Ovary (tissue), 10 donors: ENCODE measurements at regions of chr1 and their contacts with region 1.

Region 1: GRCh38 chr1:173570370-173571007 is 32.4 kb downstream of the SLC9C2 start:
- DNase-seq: no peak
- H3K4me3 ChIP-seq: no peak overlapping the region
- H3K27ac ChIP-seq: no peak overlapping the region
- H3K4me1 ChIP-seq: no peaks in the 10 kb centered on the region
- H3K27me3 ChIP-seq: no peaks in the 10 kb centered on the region
- CTCF ChIP-seq: no peak
- EP300 ChIP-seq: no peak
- POLR2A ChIP-seq: no peak

Region 2: DNA sequence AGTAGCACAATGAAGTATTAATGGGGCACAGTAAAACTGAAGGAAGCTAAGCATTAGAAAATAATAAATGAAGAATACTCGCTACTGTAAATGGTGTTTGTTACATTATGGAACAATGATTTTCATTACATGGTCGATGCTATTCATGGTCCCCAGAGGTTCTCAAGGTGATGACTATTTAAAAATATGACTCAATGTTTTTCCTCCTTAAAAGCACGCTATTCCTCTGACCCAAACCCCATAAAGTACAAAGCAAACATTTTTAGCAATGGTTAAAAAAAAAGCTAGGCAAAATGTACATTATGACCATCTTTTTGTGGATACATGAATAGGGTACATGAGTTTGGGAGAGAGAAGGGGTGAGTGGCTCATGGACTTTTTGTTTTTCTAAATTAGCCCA is 1862.9 kb before region 1 on chr1:
- intact Hi-C with region 1: loop called in 1 of 4 experiments (anchors 5 kb)
- DNase-seq: no peak
- H3K4me3 ChIP-seq: no peak overlapping the region
- H3K27ac ChIP-seq: no peak overlapping the region
- H3K4me1 ChIP-seq: peaks cover 3% of the 10 kb centered on the region
- H3K27me3 ChIP-seq: no peaks in the 10 kb centered on the region
- CTCF ChIP-seq: no peak
- EP300 ChIP-seq: no peak
- POLR2A ChIP-seq: no peak

Region 3: GRCh38 chr1:173603056-173603620 is 32.6 kb after region 1 on chr1 and contains the start of gene SLC9C2:
- intact Hi-C with region 1: no loop called
- DNase-seq: peak in 4 of 5 donors; percentile 29 to 53 (median 37)
- H3K4me3 ChIP-seq: peak within 1 kb of the TSS; percentile 24
- H3K27ac ChIP-seq: peak within 1 kb of the TSS in 1 of 2 donors; percentile 55
- H3K4me1 ChIP-seq: peaks cover 8% of the 10 kb centered on the region
- H3K27me3 ChIP-seq: no peaks in the 10 kb centered on the region
- CTCF ChIP-seq: no peak
- EP300 ChIP-seq: no peak
- POLR2A ChIP-seq: no peak
- total RNA-seq, gene SLC9C2: 0.36 to 5.3 (median 1.0) TPM

Region 4: GRCh38 chr1:173758980-173759609 is 188.6 kb after region 1 on chr1:
- intact Hi-C with region 1: no loop called
- DNase-seq: no peak
- H3K4me3 ChIP-seq: no peak overlapping the region
- H3K27ac ChIP-seq: no peak overlapping the region
- H3K4me1 ChIP-seq: no peaks in the 10 kb centered on the region
- H3K27me3 ChIP-seq: no peaks in the 10 kb centered on the region
- CTCF ChIP-seq: no peak
- EP300 ChIP-seq: no peak
- POLR2A ChIP-seq: no peak